Left cardiac atrium (tissue), 4 donors: ENCODE measurements at regions of chr20 and their contacts with region 1.

Region 1: DNA sequence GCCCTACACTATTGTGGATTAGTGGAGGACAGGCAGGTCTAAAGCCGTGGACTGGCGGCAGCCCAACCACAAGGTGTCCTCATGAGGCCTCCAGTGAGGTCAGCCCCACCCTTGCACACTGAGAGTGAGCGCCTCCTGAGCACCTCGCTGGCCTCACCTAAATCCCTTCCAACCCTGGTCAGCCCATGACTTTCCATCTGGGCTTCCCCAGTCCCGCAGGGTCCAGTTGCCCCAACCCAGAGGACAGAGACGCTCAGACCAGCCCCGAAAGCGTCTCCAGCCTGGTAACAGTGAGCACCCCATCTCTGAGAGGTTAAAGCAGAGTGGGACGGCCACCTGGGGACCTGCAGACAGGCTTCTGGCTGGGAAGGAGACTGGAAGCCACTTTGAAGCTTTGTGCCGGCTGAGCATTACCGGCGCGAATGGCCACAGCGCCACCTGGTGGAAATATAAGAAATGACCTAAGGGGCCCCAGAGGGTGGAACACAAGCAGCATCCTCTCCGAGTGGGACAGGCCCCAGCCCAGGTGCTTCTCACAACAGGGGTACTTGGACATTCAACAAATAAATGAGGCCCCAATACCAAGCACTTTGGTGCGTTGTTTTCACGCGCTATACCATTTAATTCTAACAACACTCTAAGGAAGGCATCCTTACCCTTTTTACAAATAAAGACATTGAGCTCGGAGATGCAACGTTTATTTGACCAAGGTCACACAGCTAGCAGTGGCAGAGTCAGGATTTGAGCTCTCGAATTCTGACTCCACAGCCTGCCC is 65.7 kb upstream of the TOP1 start:
- DNase-seq: peak; percentile 67
- ATAC-seq: peak; percentile 87 to 91

Region 2: GRCh38 chr20:39112178-39112743 is 1850.7 kb before region 1 on chr20:
- intact Hi-C with region 1: loop called in 1 of 2 experiments (anchors 2 kb)
- DNase-seq: peak; percentile 51
- ATAC-seq: peak; percentile 87 to 91

Region 3: GRCh38 chr20:39264506-39265172 is 1698.3 kb before region 1 on chr20:
- intact Hi-C with region 1: loop called (anchors 2 to 10 kb)
- DNase-seq: peak; percentile 69
- ATAC-seq: peak; percentile 69 to 78

Region 4: DNA sequence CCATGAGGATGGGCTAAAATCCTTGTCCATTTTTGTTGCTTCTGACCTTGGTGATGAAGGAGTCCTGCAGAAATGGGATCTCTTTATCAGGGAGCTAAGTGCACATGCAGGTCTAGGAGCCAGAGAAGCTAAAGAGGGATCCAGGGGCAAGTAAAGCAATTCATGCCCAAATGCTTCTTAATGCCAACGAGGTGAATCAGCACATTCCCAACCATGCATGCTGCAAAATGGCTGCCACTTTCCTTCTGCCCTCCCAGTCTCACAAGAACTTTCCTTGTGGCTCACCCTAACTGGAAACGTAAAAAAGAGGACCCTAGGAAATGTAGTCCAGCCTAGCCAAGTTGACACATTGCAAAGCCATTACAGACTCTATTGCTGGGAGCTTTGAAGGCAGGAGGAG is 572.3 kb before region 1 on chr20:
- intact Hi-C with region 1: no loop called
- DNase-seq: no peak
- ATAC-seq: no peak

Region 5: DNA sequence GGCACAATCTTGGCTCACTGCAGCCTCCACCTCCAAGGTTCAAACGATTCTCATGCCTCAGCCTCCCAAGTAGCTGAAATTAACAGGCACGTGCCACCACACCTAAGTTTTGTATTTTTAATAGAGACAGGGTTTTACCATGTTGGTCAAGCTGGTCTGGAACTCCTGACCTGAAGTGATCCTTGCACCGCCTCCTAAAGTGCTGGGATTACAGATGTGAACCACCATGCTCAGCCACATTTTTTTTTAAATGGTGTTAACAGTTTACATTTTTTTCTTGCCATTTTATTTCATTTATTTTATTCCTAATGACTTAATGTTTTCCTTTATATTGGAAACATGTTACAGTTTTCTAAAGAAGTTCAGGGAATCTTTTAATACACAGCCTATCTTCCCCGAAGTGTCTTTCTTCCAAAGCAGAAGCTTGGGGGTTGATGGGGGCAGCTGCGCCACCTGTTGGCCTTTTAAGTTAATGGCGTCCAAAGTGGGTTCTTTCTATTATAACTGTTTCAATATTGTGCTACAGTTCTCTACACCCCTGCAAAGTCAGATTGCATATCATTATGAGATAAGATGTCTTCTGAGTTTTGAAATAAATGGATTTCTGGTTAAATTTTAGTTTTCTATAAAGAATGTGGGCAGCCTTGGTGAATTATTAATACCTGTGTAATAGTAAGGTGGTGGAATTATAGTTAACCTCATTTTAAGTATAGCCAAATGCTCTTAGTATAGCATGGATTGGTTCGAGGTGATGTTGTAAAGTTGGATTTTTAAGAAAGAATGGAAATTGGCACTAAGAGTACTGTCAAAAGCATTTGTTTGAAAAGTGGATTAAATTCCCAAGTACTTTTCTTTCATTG is 132.4 kb after region 1 on chr20:
- intact Hi-C with region 1: loop called (anchors 2 to 5 kb)
- DNase-seq: peak; percentile 61
- ATAC-seq: peak in 1 of 2 donors; percentile 74